ENCODE measurements at regions of chr18 and their contacts with region 1.

Region 1: GRCh38 chr18:69484699-69485396 is 84.2 kb downstream of the DOK6 start:
- DNase-seq: peak; percentile 22
- ATAC-seq: peak; percentile 46; the same call in 2 of the 3 replicates
- H3K4me3 ChIP-seq: no peak overlapping the region
- H3K27ac ChIP-seq: no peak overlapping the region
- H3K4me1 ChIP-seq: peaks cover 20% of the 10 kb centered on the region; the same call in 1 of the 2 replicates
- H3K27me3 ChIP-seq: no peaks in the 10 kb centered on the region; a peak in 1 of 5 replicates
- CTCF ChIP-seq: peak; percentile 49
- EP300 ChIP-seq: no peak
- POLR2A ChIP-seq: no peak
- RAD21 ChIP-seq: no peak

Region 2: DNA sequence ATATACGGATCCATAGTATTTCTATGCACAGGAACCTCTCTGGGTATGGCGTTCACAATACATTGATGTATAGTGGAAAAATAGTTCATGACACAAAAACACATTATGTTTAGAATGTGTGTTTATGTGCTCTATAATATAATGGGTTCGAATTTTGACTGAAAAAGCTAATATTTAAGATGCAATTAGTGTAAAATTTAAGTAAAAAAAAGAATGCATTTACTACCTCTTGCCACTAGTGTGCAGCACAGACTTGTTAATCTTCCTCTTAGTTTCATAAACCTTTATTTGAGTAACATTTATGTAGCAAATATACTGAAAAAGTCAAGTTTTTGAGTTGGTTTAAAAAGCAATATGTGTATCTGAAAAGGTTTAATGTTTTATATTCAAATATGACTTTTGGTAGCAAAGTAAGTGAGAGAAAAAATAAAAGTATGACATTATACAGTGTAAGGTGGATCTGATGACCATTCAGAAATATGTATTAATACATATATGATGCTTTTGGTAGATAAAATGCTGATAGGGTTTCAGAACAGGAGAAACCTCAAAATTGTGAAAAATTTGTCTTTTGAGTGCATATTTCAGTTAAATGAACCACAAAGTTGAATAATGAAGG is 637.5 kb before region 1 on chr18:
- CTCF ChIA-PET with region 1: no interaction called
- POLR2A ChIA-PET with region 1: no interaction called
- in situ Hi-C with region 1: no loop called
- intact Hi-C with region 1: loop called (anchors 10 kb)
- DNase-seq: peak; percentile 4
- ATAC-seq: no peak
- H3K4me3 ChIP-seq: no peak overlapping the region
- H3K27ac ChIP-seq: no peak overlapping the region
- H3K4me1 ChIP-seq: no peaks in the 10 kb centered on the region
- H3K27me3 ChIP-seq: no peaks in the 10 kb centered on the region
- CTCF ChIP-seq: peak; percentile 63
- EP300 ChIP-seq: no peak
- POLR2A ChIP-seq: no peak
- RAD21 ChIP-seq: peak; percentile 38; the same call in 1 of the 2 replicates

Measured in HepG2 (cell line).